ENCODE measurements at regions of chr2 and their contacts with region 1.

Region 1: DNA sequence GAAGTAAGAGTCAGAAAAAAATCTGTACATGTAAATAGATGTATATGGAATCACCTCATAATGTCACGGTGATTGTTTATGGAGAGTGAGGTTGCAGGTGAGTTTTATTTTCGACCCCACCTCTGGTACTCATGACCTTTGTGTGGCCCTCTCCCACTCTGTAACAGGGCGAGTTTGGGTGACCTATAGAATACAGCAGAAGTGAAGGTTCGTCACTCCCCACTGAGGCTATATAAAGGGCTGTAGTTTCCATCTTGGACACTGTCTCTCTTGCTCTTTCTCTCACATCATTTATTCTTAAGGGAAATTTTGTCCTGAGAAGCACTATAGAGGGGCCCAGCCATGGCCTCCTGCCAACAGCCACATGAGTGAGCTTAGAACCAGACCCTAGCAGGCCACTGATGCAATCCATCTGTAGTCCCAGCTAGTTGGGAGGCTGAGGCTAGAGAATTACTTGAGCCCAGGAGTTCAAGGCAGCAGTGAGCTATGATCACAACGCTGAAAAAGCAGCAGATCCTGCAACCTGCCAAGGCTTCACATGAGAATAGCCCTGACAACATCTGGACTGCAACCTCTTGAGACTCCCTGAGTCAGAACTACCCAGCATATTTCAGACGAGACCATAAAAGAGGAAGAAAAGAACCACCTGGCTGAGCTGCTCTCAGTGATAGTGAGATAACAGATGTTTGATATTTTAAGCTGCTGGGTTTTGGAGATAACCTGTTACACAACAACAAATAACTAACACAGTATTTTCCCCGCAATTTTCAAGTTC is 74.3 kb upstream of the SLC1A4 start:
- DNase-seq: peak; percentile 35
- H3K4me3 ChIP-seq: no peak overlapping the region
- H3K27ac ChIP-seq: no peak overlapping the region
- H3K4me1 ChIP-seq: peaks cover 3% of the 10 kb centered on the region; the same call in 1 of the 2 replicates
- H3K27me3 ChIP-seq: no peaks in the 10 kb centered on the region

Region 2: GRCh38 chr2:65045651-65046050 is 130.7 kb after region 1 on chr2:
- in situ Hi-C with region 1: loop called (anchors 5 kb)
- DNase-seq: no peak
- H3K4me3 ChIP-seq: no peak overlapping the region
- H3K27ac ChIP-seq: no peak overlapping the region
- H3K4me1 ChIP-seq: no peaks in the 10 kb centered on the region
- H3K27me3 ChIP-seq: no peaks in the 10 kb centered on the region

Region 3: GRCh38 chr2:65164426-65164891 is 249.5 kb after region 1 on chr2:
- in situ Hi-C with region 1: loop called (anchors 25 kb)
- DNase-seq: peak; percentile 31
- H3K4me3 ChIP-seq: no peak overlapping the region
- H3K27ac ChIP-seq: no peak overlapping the region
- H3K4me1 ChIP-seq: no peaks in the 10 kb centered on the region
- H3K27me3 ChIP-seq: no peaks in the 10 kb centered on the region

Region 4: GRCh38 chr2:65554765-65555591 is 640.1 kb after region 1 on chr2:
- in situ Hi-C with region 1: loop called (anchors 25 kb)
- DNase-seq: peak; percentile 62
- H3K4me3 ChIP-seq: no peak overlapping the region
- H3K27ac ChIP-seq: no peak overlapping the region
- H3K4me1 ChIP-seq: peaks cover 16% of the 10 kb centered on the region
- H3K27me3 ChIP-seq: no peaks in the 10 kb centered on the region

Measured in GM23248 (cell line).